ENCODE measurements at regions of chr3 and their contacts with region 1.

Region 1: DNA sequence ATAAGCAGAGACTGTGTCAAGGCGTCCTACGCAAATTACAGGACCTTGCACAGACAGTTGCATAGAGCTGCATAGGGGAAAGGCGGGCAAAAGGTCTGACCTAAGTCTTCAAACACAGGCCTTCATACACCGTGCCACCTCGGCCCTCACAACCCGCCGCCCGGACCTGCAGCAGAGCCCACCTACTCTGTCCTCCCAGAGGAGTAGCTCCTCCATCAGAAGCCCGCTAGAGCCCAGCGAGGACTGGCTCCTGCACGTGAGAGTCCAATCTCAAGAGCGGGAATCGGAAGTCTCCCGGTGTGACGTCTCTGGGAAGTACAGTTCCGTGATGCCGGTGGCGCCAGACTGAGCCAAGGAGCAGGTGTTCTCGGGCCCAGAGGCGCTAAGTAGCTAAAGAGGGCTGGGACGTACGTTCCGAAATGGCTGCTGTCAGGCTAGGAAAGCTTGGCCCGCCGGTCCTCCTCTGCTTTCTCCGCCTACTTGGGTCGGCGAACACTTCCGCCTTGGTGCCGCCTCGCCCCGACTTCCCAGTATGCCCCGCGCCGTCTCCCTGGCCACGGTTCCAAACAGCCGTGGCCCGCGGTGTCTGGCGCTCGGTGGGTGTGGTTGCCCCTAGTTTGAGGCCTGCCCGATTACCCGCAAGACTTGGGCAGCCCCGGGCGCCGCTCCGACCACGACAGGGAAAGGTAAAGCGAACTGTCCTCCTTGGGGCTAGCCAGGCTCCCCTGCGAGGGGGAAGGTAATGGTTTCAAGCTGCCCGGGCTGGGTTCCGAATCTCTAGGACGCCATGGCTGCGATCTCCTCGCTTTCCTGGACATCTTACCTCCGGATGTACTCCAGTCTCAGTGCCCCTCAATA is at the starts of genes ASTE1 and NEK11:
- DNase-seq: peak; percentile 88
- H3K4me3 Mint-ChIP-seq: peak within 1 kb of the TSS; percentile 91
- H3K27ac Mint-ChIP-seq: peak within 1 kb of the TSS; percentile 94
- H3K4me1 Mint-ChIP-seq: peaks cover 47% of the 10 kb centered on the region
- H3K27me3 Mint-ChIP-seq: no peaks in the 10 kb centered on the region
- total RNA-seq, gene ASTE1: 9.6 and 14.6 TPM in 2 replicates
- total RNA-seq, gene NEK11: 0.51 and 1.2 TPM in 2 replicates

Region 2: DNA sequence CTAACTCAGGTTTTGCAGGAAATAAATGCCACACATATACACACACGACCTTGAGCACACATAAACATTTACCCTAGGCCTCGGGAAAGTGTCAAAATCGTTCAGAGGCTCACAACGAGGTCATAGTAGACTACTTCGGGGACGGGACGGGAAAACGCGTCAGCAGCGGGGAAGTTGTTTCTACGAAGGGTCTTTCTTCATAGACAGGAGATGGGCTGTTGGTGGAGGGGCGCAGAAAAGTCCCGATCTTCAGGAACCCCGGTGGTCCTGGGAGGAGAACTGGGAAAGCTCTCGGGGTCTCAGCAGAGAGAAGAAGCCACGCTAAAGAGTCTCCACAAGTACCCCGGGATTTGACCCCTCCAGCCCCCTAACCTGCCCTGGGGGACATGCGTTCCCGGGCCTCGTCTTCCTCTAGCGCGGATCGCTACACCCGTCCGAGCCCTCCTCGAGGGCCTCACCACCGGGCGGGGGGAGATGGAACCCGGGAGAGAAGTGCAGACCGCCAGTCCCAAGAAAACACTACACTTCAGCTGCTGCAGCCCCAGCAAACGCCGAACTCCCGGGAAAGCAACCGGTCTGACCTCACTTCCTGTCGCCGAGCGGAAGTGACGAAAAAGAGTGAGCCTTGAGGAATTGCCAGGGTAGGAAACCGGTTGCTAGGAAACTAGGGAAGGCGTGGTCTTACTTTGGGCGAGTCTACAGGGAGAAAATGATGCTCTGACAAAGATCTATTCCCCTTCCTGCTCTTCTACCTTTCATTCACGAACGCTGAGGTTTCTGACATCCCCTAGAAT is 280.1 kb before region 1 on chr3 and contains the start of gene PIK3R4:
- intact Hi-C with region 1: loop called (anchors 1 kb)
- DNase-seq: peak; percentile 94
- H3K4me3 Mint-ChIP-seq: peak within 1 kb of the TSS; percentile 90
- H3K27ac Mint-ChIP-seq: peak within 1 kb of the TSS; percentile 97
- H3K4me1 Mint-ChIP-seq: peaks cover 42% of the 10 kb centered on the region
- H3K27me3 Mint-ChIP-seq: no peaks in the 10 kb centered on the region
- total RNA-seq, gene PIK3R4: 33.1 and 35.4 TPM in 2 replicates

Region 3: DNA sequence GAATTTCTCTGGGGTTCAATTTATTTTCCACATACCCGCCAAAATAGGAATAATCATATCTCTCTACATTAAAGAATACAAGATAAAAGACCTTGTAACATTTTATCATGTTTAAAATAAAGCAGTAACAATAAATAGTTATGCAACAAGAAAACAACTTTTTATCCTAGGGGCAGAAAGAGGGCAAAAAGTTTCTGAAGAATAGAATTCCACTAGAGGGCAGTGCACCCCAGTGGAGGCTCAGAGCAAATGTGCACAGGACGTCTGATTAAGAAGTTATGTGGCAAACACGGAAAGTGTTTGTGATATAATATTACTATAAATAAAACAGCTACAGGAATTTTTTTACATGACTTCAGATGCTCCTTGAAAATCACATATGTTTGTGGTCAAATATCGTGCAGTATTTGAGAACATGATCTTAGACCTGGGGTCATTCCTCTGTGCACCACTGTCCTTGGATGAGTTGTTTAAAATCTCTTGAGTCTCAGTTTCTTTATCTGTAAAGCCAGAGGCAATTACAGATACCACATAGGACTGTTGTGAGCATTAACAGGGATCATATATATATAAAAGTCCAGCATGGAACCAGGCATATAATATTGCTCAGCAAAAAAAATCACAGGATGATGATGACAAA is 266.7 kb before region 1 on chr3:
- intact Hi-C with region 1: loop called (anchors 1 kb)
- DNase-seq: peak; percentile 43
- H3K4me3 Mint-ChIP-seq: no peak overlapping the region
- H3K27ac Mint-ChIP-seq: no peak overlapping the region
- H3K4me1 Mint-ChIP-seq: peaks cover 29% of the 10 kb centered on the region
- H3K27me3 Mint-ChIP-seq: peaks cover 7% of the 10 kb centered on the region

Region 4: GRCh38 chr3:130850044-130850797 is 176.3 kb before region 1 on chr3:
- intact Hi-C with region 1: loop called (anchors 1 kb)
- DNase-seq: peak; percentile 61
- H3K4me3 Mint-ChIP-seq: peak overlapping the region; percentile 1
- H3K27ac Mint-ChIP-seq: peak overlapping the region; percentile 71
- H3K4me1 Mint-ChIP-seq: peaks cover 41% of the 10 kb centered on the region
- H3K27me3 Mint-ChIP-seq: peaks cover 26% of the 10 kb centered on the region

Region 5: GRCh38 chr3:131047582-131047981 is 21.0 kb after region 1 on chr3:
- intact Hi-C with region 1: loop called (anchors 1 kb)
- DNase-seq: no peak
- H3K4me3 Mint-ChIP-seq: no peak overlapping the region
- H3K27ac Mint-ChIP-seq: no peak overlapping the region
- H3K4me1 Mint-ChIP-seq: peaks cover 10% of the 10 kb centered on the region
- H3K27me3 Mint-ChIP-seq: peaks cover 16% of the 10 kb centered on the region

Region 6: GRCh38 chr3:131502530-131503245 is 476.1 kb after region 1 on chr3 and contains the start of gene MRPL3:
- intact Hi-C with region 1: loop called (anchors 1 kb)
- DNase-seq: peak; percentile 78
- H3K4me3 Mint-ChIP-seq: peak within 1 kb of the TSS; percentile 100
- H3K27ac Mint-ChIP-seq: peak within 1 kb of the TSS; percentile 95
- H3K4me1 Mint-ChIP-seq: peaks cover 50% of the 10 kb centered on the region
- H3K27me3 Mint-ChIP-seq: peaks cover 4% of the 10 kb centered on the region
- total RNA-seq, gene MRPL3: 166 and 175 TPM in 2 replicates

Measured in activated T-helper 1 cell treated with anti-CD3 and anti-CD28 coated beads, Interleukin-12 subunit alpha, Interleukin-12 subunit beta, Interleukin-2, Interleukin-4 antibody, amounts not matched to agents 30 ng/mL and 10 ng/mL and 1 ng/mL, durations not matched to agents 14 hours and 24 hours and 36 hours (primary cell).